MCF 10A (cell line): ENCODE measurements at regions of chr12 and their contacts with region 1.

Region 1: DNA sequence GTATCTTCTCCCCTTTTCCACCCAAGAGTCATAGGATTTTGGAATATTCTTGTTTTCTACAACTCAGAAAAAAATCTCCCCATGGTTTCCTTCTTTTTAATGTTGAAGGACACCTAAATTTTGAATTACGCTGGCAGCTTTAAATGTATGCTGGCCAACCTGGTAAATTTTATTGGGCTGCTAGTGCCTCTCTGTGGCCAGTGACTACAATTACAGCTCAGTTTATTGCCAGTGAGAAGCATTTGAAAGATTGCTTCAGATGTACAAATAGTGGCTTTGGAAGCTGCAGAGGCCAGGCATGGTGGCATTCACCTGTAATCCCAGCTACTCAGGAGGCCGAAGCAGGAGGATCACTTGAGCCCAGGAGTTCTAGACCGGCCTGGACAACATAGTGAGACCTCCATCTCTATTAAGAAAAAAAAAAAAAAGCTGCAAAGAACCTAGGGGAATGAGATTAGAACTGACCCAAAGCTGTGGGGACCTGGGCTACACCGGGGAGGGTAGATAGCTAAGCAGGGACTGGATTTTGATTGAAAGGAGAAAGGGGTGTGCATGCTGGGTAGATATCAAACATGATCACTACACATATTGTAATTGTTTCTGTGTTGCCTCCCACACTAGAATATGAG is 7.6 kb upstream of the RAB21 start:
- DNase-seq: peak; percentile 76
- H3K4me3 Mint-ChIP-seq: no peak overlapping the region
- H3K27ac Mint-ChIP-seq: no peak overlapping the region
- H3K4me1 Mint-ChIP-seq: no peaks in the 10 kb centered on the region
- H3K27me3 Mint-ChIP-seq: peaks cover 30% of the 10 kb centered on the region
- CTCF ChIP-seq: peak; percentile 78

Region 2: GRCh38 chr12:71164568-71165197 is 582.4 kb before region 1 on chr12:
- CTCF ChIA-PET with region 1: no interaction called
- POLR2A ChIA-PET with region 1: no interaction called
- intact Hi-C with region 1: no loop called
- DNase-seq: peak; percentile 17
- H3K4me3 Mint-ChIP-seq: no peak overlapping the region
- H3K27ac Mint-ChIP-seq: no peak overlapping the region
- H3K4me1 Mint-ChIP-seq: peaks cover 13% of the 10 kb centered on the region
- H3K27me3 Mint-ChIP-seq: no peaks in the 10 kb centered on the region
- CTCF ChIP-seq: no peak

Region 3: DNA sequence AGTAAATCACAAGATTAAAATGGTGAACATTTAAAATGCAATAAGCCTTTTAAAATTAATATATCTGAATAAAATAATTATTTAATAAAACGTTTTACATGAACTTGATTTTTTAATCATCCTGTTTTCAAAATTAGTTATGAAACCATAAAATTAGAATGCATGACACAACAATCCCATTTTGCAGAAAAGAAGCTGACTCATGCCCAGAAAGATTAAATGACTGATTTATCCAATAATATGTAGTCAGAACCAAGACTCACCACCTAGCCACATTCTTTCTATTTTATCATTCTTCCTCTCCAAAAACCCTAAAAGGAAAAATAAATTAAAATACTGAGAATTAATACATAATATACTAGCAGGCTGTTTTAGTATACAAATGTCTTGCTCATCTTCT is 390.5 kb before region 1 on chr12:
- CTCF ChIA-PET with region 1: no interaction called
- POLR2A ChIA-PET with region 1: no interaction called
- intact Hi-C with region 1: no loop called
- DNase-seq: no peak
- H3K4me3 Mint-ChIP-seq: no peak overlapping the region
- H3K27ac Mint-ChIP-seq: no peak overlapping the region
- H3K4me1 Mint-ChIP-seq: no peaks in the 10 kb centered on the region
- H3K27me3 Mint-ChIP-seq: no peaks in the 10 kb centered on the region
- CTCF ChIP-seq: no peak

Region 4: GRCh38 chr12:71551529-71551928 is 195.6 kb before region 1 on chr12:
- CTCF ChIA-PET with region 1: no interaction called
- POLR2A ChIA-PET with region 1: no interaction called
- intact Hi-C with region 1: loop called (anchors 2 kb)
- DNase-seq: peak; percentile 41
- H3K4me3 Mint-ChIP-seq: no peak overlapping the region
- H3K27ac Mint-ChIP-seq: no peak overlapping the region
- H3K4me1 Mint-ChIP-seq: no peaks in the 10 kb centered on the region
- H3K27me3 Mint-ChIP-seq: no peaks in the 10 kb centered on the region
- CTCF ChIP-seq: peak; percentile 44

Region 5: DNA sequence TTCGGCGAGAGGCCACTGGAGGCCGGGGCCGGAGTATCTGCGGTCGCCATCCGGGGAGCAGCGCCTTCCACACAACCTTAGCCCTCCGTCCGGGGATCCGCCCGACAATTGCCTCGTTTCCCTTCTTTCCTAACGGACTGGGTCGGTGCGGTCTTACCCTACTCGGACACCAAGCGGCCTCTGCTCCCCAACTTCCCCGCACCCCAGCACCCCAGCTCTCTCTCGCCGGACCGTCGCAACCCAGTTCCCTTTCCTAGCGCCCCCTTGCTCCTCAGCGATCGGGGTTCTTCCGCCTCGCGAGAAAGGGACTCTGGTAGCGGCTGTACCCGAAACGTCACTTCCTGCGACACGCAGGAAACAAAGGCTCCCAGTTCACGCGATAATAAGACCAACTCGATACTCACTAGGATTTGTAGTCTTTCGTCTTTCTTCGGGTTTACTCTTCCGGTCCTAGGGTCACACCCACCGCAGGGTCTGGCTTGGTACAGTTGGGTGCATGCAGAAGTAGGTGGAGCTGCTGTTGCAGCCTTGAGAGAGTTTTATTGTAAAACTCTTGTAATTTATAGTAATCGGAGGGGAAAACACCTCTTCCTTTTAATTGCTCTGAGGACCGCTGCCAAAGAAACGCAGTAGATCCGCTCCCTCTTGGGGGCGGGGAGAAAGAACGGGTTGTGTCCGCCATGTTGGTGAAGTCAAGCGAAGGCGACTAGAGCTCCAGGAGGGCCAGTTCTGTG is 83.4 kb before region 1 on chr12 and contains the start of gene ZFC3H1:
- CTCF ChIA-PET with region 1: interaction called, 76 read pairs
- POLR2A ChIA-PET with region 1: interaction called, 258 read pairs
- intact Hi-C with region 1: loop called (anchors 1 kb)
- DNase-seq: peak; percentile 99
- H3K4me3 Mint-ChIP-seq: peak within 1 kb of the TSS; percentile 100
- H3K27ac Mint-ChIP-seq: peak within 1 kb of the TSS; percentile 100
- H3K4me1 Mint-ChIP-seq: peaks cover 32% of the 10 kb centered on the region
- H3K27me3 Mint-ChIP-seq: no peaks in the 10 kb centered on the region
- CTCF ChIP-seq: peak; percentile 9
- total RNA-seq, gene ZFC3H1: 55.3 and 55.8 TPM in 2 replicates

Region 6: GRCh38 chr12:71694099-71694820 is 52.8 kb before region 1 on chr12:
- CTCF ChIA-PET with region 1: interaction called, 226 read pairs
- POLR2A ChIA-PET with region 1: interaction called, 4 read pairs
- intact Hi-C with region 1: no loop called
- DNase-seq: no peak
- H3K4me3 Mint-ChIP-seq: no peak overlapping the region
- H3K27ac Mint-ChIP-seq: peak overlapping the region; percentile 79
- H3K4me1 Mint-ChIP-seq: peaks cover 24% of the 10 kb centered on the region
- H3K27me3 Mint-ChIP-seq: no peaks in the 10 kb centered on the region
- CTCF ChIP-seq: no peak

Region 7: DNA sequence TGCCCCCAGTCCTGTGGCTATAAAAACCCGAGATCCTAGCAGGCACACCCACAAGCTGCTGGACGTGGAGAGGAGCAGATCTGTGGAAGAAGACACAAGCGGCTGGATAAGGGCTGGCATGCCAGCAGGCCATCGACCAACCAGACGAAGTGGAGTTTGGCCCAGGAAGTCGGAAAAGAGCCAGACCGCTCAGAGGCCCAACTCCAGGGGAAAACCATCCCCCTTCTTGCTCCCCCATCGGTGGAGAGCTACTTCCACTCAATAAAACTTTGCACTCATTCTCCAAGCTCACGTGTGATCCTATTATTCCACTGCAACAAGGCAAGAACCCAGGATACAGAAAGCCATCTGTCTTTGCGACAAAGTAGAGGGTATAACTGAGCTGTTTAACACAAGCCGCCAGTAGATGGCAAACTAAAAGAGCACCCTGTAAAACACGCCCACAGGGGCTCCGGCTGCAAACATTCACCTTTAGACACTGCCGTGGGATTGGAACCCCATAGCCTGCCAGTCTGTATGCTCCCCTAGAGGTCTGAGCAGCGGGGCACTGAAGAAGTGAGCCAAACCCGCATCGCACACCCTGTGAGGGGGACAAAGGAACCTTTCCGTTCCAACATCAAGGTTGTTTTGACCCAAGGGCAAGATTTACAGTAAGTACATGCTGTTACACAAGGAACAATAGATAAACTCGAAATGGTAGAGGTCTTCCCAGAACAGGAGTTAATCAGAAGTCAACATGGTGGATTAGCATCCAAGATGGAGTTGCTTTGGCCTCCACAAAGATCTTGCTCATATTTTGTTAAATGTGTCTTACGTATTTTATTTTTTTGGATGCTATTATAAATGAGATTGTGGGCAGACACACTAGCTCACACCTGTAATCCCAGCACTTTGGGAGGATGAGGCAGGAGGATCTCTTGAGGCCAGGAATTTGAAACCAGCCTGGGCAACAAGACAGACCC is 15.1 kb before region 1 on chr12:
- CTCF ChIA-PET with region 1: interaction called, 23 read pairs
- POLR2A ChIA-PET with region 1: interaction called, 7 read pairs
- intact Hi-C with region 1: no loop called
- DNase-seq: no peak
- H3K4me3 Mint-ChIP-seq: no peak overlapping the region
- H3K27ac Mint-ChIP-seq: no peak overlapping the region
- H3K4me1 Mint-ChIP-seq: peaks cover 6% of the 10 kb centered on the region
- H3K27me3 Mint-ChIP-seq: no peaks in the 10 kb centered on the region
- CTCF ChIP-seq: no peak

Region 8: DNA sequence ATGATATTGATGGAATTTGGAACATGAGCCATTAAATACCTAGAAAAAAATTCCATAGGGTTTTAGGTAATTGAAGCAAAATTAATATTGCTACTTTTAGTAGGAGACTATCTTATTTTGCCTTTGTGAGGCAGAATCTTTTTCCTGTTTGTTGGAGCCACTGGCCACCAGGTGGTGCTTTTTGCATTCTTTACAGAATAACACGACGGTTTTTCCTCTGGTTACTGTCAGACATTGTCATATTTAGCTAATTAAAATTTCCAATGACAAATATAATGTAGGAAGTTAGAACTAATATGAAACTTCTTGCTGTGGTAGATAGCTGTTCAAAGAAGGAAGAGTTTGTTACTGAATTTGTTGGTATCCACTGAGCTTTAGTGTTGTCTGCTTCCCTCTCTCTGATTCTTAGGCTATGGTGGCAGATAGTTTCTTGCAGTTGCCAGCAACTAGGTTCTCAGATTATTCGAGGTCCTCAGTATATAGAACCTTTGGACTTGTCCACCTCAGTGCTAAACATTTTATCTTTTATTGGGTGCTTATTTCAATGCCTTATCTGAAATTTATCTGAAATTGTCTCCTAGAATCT is 33.2 kb after region 1 on chr12:
- CTCF ChIA-PET with region 1: no interaction called
- POLR2A ChIA-PET with region 1: no interaction called
- intact Hi-C with region 1: no loop called
- DNase-seq: peak; percentile 59
- H3K4me3 Mint-ChIP-seq: no peak overlapping the region
- H3K27ac Mint-ChIP-seq: no peak overlapping the region
- H3K4me1 Mint-ChIP-seq: peaks cover 5% of the 10 kb centered on the region
- H3K27me3 Mint-ChIP-seq: no peaks in the 10 kb centered on the region
- CTCF ChIP-seq: peak; percentile 62

Region 9: DNA sequence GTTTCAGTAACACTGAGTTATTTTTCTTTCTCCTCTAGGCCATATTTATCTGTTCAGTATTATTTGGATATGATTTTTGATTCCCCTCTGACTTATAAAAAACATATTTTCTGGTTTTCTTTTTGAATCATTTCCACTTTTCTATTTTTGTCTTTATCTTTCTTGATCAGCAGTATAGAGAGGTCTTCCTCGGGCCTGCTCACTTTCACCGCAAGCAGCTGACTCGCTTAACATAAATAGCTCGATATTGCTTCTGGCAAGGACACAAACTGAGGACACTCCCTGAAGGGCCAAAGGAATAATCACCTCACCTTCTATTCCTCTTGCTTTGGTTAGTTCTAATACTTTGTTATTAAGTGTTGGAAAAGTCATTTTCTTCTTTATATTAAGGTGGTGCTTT is 499.3 kb after region 1 on chr12:
- CTCF ChIA-PET with region 1: no interaction called
- POLR2A ChIA-PET with region 1: no interaction called
- intact Hi-C with region 1: no loop called
- DNase-seq: peak; percentile 9
- H3K4me3 Mint-ChIP-seq: no peak overlapping the region
- H3K27ac Mint-ChIP-seq: no peak overlapping the region
- H3K4me1 Mint-ChIP-seq: no peaks in the 10 kb centered on the region
- H3K27me3 Mint-ChIP-seq: no peaks in the 10 kb centered on the region
- CTCF ChIP-seq: no peak